ENCODE measurements at regions of chr16 and their contacts with region 1.

Region 1: DNA sequence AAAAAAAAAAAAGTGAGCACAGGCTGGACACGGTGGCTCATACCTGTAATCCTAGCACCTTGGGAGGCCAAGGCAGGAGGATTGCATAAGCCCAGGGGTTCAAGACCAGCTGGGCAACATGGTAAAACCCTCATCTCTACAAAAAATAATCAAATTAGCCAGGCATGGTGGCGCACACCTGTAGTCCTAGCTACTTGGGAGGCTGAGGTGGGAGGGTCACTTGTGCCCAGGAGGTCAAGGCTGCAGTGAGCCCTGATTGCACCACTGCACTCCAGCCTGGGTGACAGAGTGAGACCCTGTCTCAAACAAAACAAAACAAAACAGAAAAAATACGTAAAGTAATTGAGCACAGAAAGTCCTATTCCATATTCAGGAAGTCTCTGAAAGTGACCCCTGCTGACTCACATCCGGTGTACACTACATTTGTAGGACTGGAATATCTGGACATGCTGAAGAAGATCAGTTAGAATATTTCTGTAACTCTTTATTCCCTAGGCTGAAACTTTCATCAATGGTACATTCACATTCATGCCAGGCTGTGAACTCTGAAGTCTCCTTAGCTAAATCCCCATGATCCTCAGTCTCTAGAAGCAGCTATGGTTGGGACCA is 66.0 kb upstream of the HAS3 start:
- DNase-seq: no peak
- ATAC-seq: no peak

Region 2: DNA sequence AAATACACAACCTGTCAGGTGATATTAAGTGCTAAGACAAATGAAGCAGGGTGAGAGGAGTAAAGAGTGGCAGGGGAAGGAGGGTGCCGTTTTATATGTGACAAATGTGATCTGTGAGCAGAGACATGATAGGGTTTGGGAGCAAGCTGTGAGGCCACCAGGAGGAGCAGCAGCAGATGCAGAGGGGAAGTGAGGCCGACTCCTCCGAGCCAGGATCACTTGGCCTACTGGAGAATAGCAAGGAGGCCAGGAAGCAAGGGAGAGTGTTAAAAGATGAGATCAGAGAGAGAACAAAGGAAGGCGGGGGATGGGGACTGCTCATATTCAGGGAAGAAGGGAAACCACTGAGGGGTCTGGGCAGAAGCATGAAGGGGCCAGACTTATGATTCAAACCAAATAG is 66.7 kb before region 1 on chr16:
- intact Hi-C with region 1: loop called (anchors 10 kb)
- DNase-seq: no peak
- ATAC-seq: no peak

Region 3: GRCh38 chr16:69112285-69113129 is 73.1 kb after region 1 on chr16:
- intact Hi-C with region 1: no loop called
- DNase-seq: peak; percentile 65
- ATAC-seq: peak; percentile 60

Measured in left ventricle myocardium superior (tissue), 1 donor.